Breast epithelium (tissue), 4 donors: ENCODE measurements at regions of chr9 and their contacts with region 1.

Region 1: GRCh38 chr9:95462249-95463147 is 54.3 kb downstream of the PTCH1 start:
- DNase-seq: peak in 1 of 2 donors; percentile 61
- H3K4me3 ChIP-seq: peak overlapping the region; percentile 17 to 62 (median 32)
- H3K27ac ChIP-seq: peak overlapping the region; percentile 25 to 46
- H3K4me1 ChIP-seq: peaks cover 0 to 7% of the 10 kb centered on the region in 2 donors
- H3K27me3 ChIP-seq: no peaks in the 10 kb centered on the region
- CTCF ChIP-seq: no peak
- POLR2A ChIP-seq: no peak

Region 2: DNA sequence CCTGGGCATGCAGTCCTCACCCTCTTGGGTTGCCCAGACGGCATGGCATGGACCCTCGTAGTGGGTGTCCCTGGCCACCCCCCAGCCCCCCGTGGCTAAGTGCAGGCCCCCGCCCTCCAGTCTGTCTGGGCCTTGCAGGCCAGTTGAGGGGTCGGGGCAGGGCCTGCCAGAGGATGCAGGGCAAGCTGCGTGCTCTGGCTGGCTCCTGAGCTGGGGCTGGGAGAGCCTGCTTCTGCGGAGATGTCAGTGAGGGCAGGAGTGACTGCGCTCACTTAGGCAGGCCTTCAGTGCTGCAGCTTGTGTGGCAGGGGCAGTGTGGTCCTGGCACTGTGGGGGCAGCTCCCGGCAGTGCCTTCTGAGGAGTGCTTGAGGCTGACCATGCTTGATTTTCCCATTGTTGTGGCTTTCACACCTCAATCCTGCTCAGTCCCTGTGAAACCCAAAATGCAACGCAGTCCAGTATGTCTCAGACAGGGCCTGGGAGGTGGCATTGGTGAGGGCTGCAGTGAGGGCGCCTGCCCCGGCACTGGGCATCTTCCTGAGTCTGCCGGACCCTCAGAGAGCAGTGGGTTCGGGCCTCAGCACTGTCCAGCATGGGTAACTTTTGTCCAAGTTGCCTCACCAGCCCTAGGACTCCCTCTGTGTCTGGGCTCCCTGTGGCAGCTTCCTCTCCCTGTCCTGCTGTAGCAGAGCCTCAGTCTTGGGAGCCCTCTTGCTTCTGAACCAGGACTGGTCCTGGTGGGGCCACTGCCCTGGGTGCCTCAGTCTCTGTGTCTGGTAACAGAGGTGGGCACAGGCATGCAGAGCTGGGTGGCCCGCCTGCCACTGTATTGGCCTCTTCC is 1793.2 kb before region 1 on chr9:
- intact Hi-C with region 1: loop called (anchors 5 kb)
- DNase-seq: peak; percentile 14 to 25
- H3K4me3 ChIP-seq: no peak overlapping the region
- H3K27ac ChIP-seq: peak overlapping the region in 1 of 2 donors; percentile 5
- H3K4me1 ChIP-seq: no peaks in the 10 kb centered on the region
- H3K27me3 ChIP-seq: no peaks in the 10 kb centered on the region
- CTCF ChIP-seq: no peak
- POLR2A ChIP-seq: no peak

Region 3: DNA sequence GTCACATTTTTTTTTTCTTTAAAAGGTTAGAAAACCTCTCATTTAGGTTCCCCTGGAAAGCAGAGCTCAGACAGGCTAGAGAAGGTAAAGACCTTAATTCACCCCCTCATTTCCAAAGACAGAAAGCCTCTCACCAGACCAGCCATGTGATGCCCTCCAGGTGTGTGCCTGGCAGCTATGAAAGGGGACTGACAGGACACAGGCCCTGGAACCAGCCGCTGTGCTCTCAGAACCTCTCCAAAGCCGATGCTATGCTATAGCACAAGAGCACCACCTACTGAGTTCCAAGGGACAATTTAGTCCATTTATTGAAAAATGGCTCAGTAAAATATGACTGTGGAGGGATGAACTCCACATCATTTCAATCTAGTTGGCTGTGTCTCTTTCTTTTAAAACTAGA is 193.8 kb before region 1 on chr9:
- intact Hi-C with region 1: no loop called
- DNase-seq: no peak
- H3K4me3 ChIP-seq: no peak overlapping the region
- H3K27ac ChIP-seq: no peak overlapping the region
- H3K4me1 ChIP-seq: no peaks in the 10 kb centered on the region
- H3K27me3 ChIP-seq: no peaks in the 10 kb centered on the region
- CTCF ChIP-seq: no peak
- POLR2A ChIP-seq: no peak

Region 4: GRCh38 chr9:95447660-95448420 is 14.7 kb before region 1 on chr9:
- intact Hi-C with region 1: no loop called
- DNase-seq: no peak
- H3K4me3 ChIP-seq: no peak overlapping the region
- H3K27ac ChIP-seq: no peak overlapping the region
- H3K4me1 ChIP-seq: no peaks in the 10 kb centered on the region
- H3K27me3 ChIP-seq: no peaks in the 10 kb centered on the region
- CTCF ChIP-seq: no peak
- POLR2A ChIP-seq: no peak

Region 5: GRCh38 chr9:96690966-96691725 is 1228.6 kb after region 1 on chr9:
- intact Hi-C with region 1: loop called (anchors 10 kb)
- DNase-seq: no peak
- H3K4me3 ChIP-seq: no peak overlapping the region
- H3K27ac ChIP-seq: no peak overlapping the region
- H3K4me1 ChIP-seq: no peaks in the 10 kb centered on the region
- H3K27me3 ChIP-seq: no peaks in the 10 kb centered on the region
- CTCF ChIP-seq: no peak
- POLR2A ChIP-seq: no peak